OCI-LY7 (cell line): ENCODE measurements at regions of chr20 and their contacts with region 1.

Region 1: GRCh38 chr20:4949833-4950178 is 51.5 kb downstream of the SLC23A2 start:
- DNase-seq: peak; percentile 60
- H3K4me3 ChIP-seq: no peak overlapping the region
- H3K27ac ChIP-seq: no peak overlapping the region
- H3K4me1 ChIP-seq: peaks cover 18% of the 10 kb centered on the region
- CTCF ChIP-seq: peak; percentile 92

Region 2: DNA sequence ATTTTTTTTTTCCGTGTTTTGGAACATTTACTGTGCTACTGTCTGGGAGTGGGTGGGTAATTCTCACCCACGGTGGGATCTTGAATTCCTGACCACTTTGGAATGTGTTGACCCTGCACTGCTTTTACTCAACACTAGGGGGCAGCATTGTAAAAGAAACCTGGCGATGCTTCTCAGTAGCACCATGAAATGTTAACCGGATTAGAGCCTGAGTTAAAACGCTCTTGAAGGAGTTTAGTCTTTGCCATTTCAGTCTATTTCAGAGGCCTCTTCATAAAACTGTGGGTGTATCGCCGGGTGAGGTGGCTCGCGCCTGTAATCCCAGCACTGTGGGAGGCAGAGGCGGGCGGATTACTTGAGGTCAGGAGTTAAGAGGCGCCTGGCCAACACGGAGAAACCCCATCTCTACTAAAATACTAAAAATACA is 342.5 kb before region 1 on chr20:
- CTCF ChIA-PET with region 1: no interaction called
- POLR2A ChIA-PET with region 1: no interaction called
- intact Hi-C with region 1: loop called (anchors 5 kb)
- DNase-seq: peak; percentile 74
- H3K4me3 ChIP-seq: no peak overlapping the region
- H3K27ac ChIP-seq: no peak overlapping the region
- H3K4me1 ChIP-seq: no peaks in the 10 kb centered on the region
- CTCF ChIP-seq: peak; percentile 98